CD4-positive, alpha-beta T cell (primary cell): ENCODE measurements at regions of chr1 and their contacts with region 1.

Region 1: DNA sequence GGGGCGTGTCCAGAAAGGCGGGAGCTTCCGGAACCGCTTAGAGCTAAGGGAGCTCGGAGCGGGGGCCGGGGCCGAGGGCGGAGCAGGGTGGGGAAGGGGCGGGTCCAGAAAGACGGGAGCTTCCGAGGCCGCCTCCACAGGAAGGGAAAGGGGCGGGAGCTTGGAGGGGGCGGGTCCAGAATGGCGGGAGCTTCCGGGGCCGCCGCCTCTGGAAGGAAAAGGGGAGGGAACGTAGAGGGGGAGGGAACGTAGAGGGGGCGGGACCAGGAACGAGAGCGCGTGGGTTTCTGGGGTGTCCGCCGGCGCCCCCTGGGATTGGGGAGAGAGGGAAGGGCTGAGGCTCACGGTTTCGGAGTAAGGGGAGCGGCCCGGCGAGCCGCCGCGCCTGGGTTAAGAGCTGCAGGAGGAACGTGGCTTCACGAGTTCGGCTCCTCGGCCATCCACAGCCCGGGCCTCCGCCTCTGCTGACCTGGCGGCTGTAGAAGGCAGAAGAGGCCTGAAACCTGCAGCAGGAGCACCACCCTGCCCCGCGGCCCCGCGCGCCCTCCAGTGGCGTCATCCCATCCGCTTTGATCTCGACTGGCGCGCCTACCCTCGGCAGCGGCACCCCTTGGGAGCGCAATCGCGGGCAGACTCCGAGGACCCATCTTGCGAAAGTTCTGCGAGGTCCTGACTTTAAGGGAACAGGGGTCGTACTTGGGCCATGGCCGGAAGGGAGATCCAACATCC is 22.9 kb upstream of the HPDL start:
- DNase-seq: peak; percentile 96 to 100 (median 98)
- ATAC-seq: peak; percentile 85
- H3K4me3 ChIP-seq: peak overlapping the region; percentile 84
- H3K4me3 Mint-ChIP-seq: peak overlapping the region; percentile 95
- H3K27ac ChIP-seq: peak overlapping the region; percentile 67 to 95
- H3K27ac Mint-ChIP-seq: peak overlapping the region; percentile 95
- H3K4me1 ChIP-seq: peaks cover 24% of the 10 kb centered on the region
- H3K4me1 Mint-ChIP-seq: peaks cover 30% of the 10 kb centered on the region
- H3K27me3 ChIP-seq: no peaks in the 10 kb centered on the region
- H3K27me3 Mint-ChIP-seq: no peaks in the 10 kb centered on the region
- CTCF ChIP-seq: peak; percentile 84

Region 2: DNA sequence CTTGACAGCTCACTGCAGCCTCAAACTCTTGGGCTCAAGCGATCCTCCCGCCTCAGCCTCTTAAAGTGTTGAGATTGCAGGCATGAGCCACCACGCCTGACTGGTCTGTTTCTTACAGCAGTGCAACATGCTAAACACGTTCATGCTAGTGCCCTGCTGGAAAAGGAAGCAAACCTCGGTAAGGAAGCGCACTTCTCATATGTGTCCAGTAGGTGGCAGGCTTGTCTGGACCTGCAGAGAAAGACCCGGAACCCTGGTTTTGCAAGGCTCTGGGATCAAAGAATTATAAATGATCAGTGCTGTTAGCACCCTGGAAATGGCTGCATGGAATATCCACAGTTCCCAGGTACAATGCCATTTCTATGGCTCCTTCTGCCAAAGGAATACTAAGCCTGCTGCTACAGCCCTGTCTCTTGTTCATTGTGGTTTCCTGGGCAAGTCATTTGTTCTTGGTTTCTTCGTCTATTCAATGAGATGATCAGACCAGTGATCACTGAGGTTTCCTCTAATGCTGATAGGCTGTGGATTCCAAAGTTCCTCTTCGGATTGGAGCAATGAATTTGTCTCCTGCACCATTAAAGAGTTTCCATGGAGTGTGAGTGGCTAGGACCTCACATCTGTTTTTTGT is 588.7 kb before region 1 on chr1:
- CTCF ChIA-PET with region 1: no interaction called
- POLR2A ChIA-PET with region 1: interaction called, 3 read pairs
- intact Hi-C with region 1: loop called in 1 of 2 experiments (anchors 5 kb)
- DNase-seq: peak; percentile 48 to 88 (median 56)
- ATAC-seq: peak; percentile 93
- H3K4me3 ChIP-seq: peak overlapping the region; percentile 20
- H3K4me3 Mint-ChIP-seq: peak overlapping the region; percentile 69
- H3K27ac ChIP-seq: no peak overlapping the region
- H3K27ac Mint-ChIP-seq: peak overlapping the region; percentile 78
- H3K4me1 ChIP-seq: peaks cover 44% of the 10 kb centered on the region
- H3K4me1 Mint-ChIP-seq: peaks cover 44% of the 10 kb centered on the region
- H3K27me3 ChIP-seq: no peaks in the 10 kb centered on the region
- H3K27me3 Mint-ChIP-seq: no peaks in the 10 kb centered on the region
- CTCF ChIP-seq: peak; percentile 98

Region 3: GRCh38 chr1:44786138-44786840 is 517.5 kb before region 1 on chr1:
- CTCF ChIA-PET with region 1: no interaction called
- POLR2A ChIA-PET with region 1: no interaction called
- intact Hi-C with region 1: loop called (anchors 5 kb)
- DNase-seq: peak; percentile 64 to 89 (median 74)
- ATAC-seq: peak; percentile 84
- H3K4me3 ChIP-seq: peak overlapping the region; percentile 58
- H3K4me3 Mint-ChIP-seq: peak overlapping the region; percentile 86
- H3K27ac ChIP-seq: peak overlapping the region; percentile 4 to 37
- H3K27ac Mint-ChIP-seq: peak overlapping the region; percentile 53
- H3K4me1 ChIP-seq: peaks cover 35% of the 10 kb centered on the region
- H3K4me1 Mint-ChIP-seq: peaks cover 31% of the 10 kb centered on the region
- H3K27me3 ChIP-seq: no peaks in the 10 kb centered on the region
- H3K27me3 Mint-ChIP-seq: no peaks in the 10 kb centered on the region
- CTCF ChIP-seq: peak; percentile 99

Region 4: GRCh38 chr1:44985747-44986359 is 317.9 kb before region 1 on chr1:
- CTCF ChIA-PET with region 1: no interaction called
- POLR2A ChIA-PET with region 1: interaction called, 10 read pairs
- intact Hi-C with region 1: no loop called
- DNase-seq: no peak
- ATAC-seq: no peak
- H3K4me3 ChIP-seq: peak overlapping the region; percentile 73
- H3K4me3 Mint-ChIP-seq: peak overlapping the region; percentile 99
- H3K27ac ChIP-seq: no peak overlapping the region
- H3K27ac Mint-ChIP-seq: peak overlapping the region; percentile 74
- H3K4me1 ChIP-seq: peaks cover 20% of the 10 kb centered on the region
- H3K4me1 Mint-ChIP-seq: peaks cover 32% of the 10 kb centered on the region
- H3K27me3 ChIP-seq: no peaks in the 10 kb centered on the region
- H3K27me3 Mint-ChIP-seq: no peaks in the 10 kb centered on the region
- CTCF ChIP-seq: no peak

Region 5: DNA sequence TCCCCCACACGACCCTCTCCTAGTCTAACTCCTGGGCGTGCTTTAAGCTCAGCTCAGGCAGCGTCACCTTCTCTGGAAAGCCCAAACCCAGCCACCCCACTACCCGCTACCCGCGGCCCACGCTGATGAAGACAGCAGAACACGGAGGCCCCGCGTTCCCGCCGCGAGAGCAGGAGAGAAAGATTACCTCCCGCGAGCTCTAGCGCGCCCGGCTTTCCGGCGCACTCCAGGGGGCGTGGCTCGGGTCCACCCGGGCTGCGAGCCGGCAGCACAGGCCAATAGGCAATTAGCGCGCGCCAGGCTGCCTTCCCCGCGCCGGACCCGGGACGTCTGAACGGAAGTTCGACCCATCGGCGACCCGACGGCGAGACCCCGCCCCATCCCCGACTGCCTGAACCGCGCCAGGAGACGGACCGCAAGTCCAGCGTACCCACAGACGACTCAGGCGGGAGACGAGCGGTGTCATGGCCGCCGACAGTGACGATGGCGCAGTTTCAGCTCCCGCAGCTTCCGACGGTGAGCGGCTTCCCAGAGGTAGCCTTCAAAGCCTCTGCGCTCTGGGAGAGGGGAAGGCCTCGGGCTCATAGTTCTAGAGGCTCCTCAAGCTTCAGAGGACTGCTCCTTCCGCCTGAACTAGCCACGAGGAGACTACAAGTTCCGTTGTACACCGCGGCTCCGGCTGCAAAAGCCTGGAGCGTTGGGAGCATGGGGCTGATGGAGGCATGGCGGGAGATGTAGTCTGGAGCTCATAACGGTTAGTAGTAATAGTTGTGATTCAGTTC is 36.2 kb after region 1 on chr1 and contains the starts of genes MUTYH and TOE1:
- CTCF ChIA-PET with region 1: interaction called, 21 read pairs
- POLR2A ChIA-PET with region 1: interaction called, 163 read pairs
- intact Hi-C with region 1: loop called (anchors 1 kb)
- DNase-seq: peak; percentile 83 to 94 (median 88)
- ATAC-seq: peak; percentile 79
- H3K4me3 ChIP-seq: peak within 1 kb of the TSS; percentile 98
- H3K4me3 Mint-ChIP-seq: peak within 1 kb of the TSS; percentile 100
- H3K27ac ChIP-seq: peak within 1 kb of the TSS; percentile 98 to 100
- H3K27ac Mint-ChIP-seq: peak within 1 kb of the TSS; percentile 95
- H3K4me1 ChIP-seq: peaks cover 42% of the 10 kb centered on the region
- H3K4me1 Mint-ChIP-seq: peaks cover 58% of the 10 kb centered on the region
- H3K27me3 ChIP-seq: no peaks in the 10 kb centered on the region
- H3K27me3 Mint-ChIP-seq: no peaks in the 10 kb centered on the region
- CTCF ChIP-seq: no peak
- total RNA-seq, gene MUTYH: 57.9 to 67.4 TPM
- total RNA-seq, gene TOE1: 44.5 to 46.2 TPM

Region 6: DNA sequence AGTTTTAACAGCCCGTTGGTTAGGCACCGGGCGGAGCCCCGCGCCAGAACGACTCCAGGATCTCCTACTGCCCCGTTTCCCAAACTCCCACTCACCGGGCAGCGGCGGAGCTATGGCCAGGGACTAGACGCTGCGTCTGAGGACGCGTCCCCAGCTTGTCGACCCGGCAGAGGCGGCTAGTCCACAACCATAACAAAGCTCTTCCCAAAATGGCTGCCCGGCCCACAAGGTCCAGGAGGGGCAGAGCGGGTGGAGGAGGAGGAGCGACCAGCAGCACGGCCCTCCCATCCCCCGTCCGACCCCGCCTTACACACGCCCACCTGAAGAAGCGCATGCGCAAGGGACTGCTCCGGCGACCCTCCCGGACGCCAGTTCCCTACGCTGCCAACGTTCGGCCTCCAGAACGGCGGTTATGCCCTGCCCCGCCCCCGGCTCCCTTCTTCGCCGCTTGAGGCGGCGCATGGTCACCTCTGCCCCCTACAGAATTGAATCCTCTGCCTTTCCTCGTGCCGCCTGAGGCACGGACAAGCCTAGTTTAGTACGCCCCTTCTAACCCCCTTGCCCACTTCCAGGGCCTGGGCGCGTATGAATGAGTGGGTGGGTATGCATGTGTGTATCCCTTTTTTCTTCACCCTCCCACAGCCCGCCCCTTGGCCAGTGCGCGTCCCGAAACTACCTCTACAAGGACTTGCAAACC is 382.7 kb after region 1 on chr1 and contains the start of gene GPBP1L1:
- CTCF ChIA-PET with region 1: no interaction called
- POLR2A ChIA-PET with region 1: interaction called, 14 read pairs
- intact Hi-C with region 1: loop called in 1 of 2 experiments (anchors 2 kb)
- DNase-seq: peak; percentile 96 to 99 (median 98)
- ATAC-seq: peak; percentile 68
- H3K4me3 ChIP-seq: peak within 1 kb of the TSS; percentile 95
- H3K4me3 Mint-ChIP-seq: peak within 1 kb of the TSS; percentile 99
- H3K27ac ChIP-seq: peak within 1 kb of the TSS; percentile 97
- H3K27ac Mint-ChIP-seq: peak within 1 kb of the TSS; percentile 100
- H3K4me1 ChIP-seq: peaks cover 44% of the 10 kb centered on the region
- H3K4me1 Mint-ChIP-seq: peaks cover 51% of the 10 kb centered on the region
- H3K27me3 ChIP-seq: no peaks in the 10 kb centered on the region
- H3K27me3 Mint-ChIP-seq: no peaks in the 10 kb centered on the region
- CTCF ChIP-seq: no peak
- total RNA-seq, gene GPBP1L1: 116 to 125 TPM